ENCODE measurements at regions of chr17 and their contacts with region 1.

Region 1: DNA sequence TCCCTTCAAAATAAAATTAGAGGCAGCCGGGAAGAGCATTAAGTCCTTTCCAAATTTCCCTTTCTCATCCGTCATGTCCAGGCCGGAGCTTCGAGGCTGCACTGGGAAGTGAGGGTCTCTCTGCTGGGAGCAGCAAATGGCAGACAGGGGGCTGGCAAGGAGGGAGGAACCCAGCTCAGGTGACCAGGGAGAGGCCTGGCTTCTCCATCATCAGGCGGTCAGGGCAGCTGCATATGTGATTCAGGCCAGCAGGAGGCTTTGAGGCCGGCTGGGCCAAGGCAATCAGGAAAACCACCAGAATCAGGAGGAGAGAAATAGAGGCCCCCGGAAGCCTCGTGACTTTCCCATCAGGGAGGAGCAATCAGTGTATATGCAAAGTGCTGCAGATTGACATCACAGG is 85.0 kb upstream of the RPL38 start:
- DNase-seq: peak; percentile 79
- ATAC-seq: peak; percentile 87
- H3K4me3 Mint-ChIP-seq: 0 out of 2 replicates have a peak overlapping the region, but pooled peaks have one; percentile 13
- H3K27ac Mint-ChIP-seq: peak overlapping the region; percentile 69
- H3K4me1 Mint-ChIP-seq: peaks cover 51% of the 10 kb centered on the region
- H3K27me3 Mint-ChIP-seq: peaks cover 6% of the 10 kb centered on the region; the same call in 1 of the 2 replicates
- CTCF ChIP-seq: 0 out of 2 replicates have a peak, but pooled peaks have one; percentile 27

Region 2: DNA sequence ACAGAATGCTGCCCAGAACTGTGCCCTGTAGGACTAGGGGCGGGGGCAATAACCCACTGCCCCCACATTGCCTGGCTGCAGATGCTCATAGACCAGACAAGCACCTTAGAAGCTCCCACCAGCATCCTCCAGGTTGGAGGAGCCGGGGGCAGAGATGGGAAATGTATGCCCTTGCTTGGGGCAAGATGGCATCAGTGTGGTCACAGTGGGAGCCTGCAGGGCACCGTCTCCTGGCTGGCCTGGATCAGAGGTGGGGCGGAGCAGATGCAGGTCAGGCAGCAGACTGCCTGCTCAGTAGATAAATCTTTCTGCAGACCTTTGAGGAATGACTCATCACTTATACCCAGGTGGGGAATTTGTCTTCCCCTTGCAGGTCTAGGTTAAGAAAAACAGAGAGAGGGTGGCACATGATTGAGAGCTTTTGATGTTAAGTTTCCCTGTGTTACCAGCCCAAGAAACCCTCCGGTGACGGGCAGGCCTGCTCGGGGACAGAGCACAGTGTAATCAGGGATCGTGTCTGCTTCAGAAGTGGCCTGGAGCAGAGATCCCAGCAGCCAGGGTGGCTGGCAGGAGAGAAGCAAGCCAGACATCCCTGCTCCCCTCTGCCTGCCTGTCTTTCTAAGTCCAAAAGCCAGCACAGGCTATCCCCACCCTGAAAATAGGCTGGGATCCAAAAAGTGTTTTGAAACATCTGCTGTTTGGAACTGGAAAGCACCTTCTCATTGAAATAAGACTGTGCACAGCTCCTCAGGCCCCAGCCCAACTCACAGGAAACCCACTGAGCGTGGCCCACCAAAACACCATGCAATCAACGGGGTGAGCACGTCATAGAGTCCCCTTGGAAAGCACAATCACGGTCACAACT is 34.3 kb after region 1 on chr17:
- CTCF ChIA-PET with region 1: interaction called, 12 read pairs
- POLR2A ChIA-PET with region 1: no interaction called
- DNase-seq: no peak
- ATAC-seq: no peak
- H3K4me3 Mint-ChIP-seq: no peak overlapping the region
- H3K27ac Mint-ChIP-seq: no peak overlapping the region
- H3K4me1 Mint-ChIP-seq: peaks cover 17% of the 10 kb centered on the region
- H3K27me3 Mint-ChIP-seq: no peaks in the 10 kb centered on the region; the same call in 1 of the 2 replicates
- CTCF ChIP-seq: no peak

Region 3: GRCh38 chr17:74176546-74177001 is 58.1 kb after region 1 on chr17:
- CTCF ChIA-PET with region 1: interaction called, 19 read pairs
- POLR2A ChIA-PET with region 1: interaction called, 4 read pairs
- DNase-seq: peak; percentile 81
- ATAC-seq: peak; percentile 89
- H3K4me3 Mint-ChIP-seq: no peak overlapping the region
- H3K27ac Mint-ChIP-seq: no peak overlapping the region
- H3K4me1 Mint-ChIP-seq: peaks cover 9% of the 10 kb centered on the region; the same call in 1 of the 2 replicates
- H3K27me3 Mint-ChIP-seq: peaks cover 4% of the 10 kb centered on the region
- CTCF ChIP-seq: peak; percentile 81

Region 4: DNA sequence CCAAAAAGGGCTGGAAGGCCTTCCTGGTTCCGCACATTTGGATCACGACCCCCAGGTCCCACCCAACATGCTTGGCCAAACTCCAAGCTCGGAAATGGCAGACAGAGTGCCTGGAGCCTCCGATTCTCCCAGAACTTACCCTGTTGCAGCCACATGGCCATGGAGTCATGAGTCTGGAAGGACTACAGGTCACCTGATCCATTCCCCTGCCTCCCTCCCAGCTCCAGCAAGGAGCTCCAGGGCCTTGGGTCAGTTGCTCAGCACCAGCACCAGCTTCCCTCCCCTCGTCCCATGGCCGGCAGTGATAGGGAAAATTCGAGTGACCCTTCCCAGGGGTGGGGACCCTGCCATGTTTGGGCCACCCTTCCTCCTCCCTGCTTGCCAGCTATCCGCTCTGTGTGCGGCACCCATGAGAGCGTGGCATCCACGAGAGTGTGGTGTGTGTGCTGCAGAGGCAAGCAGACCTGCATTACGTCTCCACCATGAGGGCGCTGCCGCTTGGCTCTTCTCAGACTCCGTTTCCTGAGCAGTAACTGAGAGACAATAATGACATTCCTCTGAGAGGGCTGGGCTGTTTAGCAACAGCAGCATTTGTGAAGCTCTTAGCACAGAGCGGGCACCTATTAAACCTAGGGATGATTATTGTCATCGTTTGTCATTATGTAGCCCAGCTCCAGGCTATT is 63.7 kb after region 1 on chr17:
- CTCF ChIA-PET with region 1: interaction called, 19 read pairs
- POLR2A ChIA-PET with region 1: no interaction called
- DNase-seq: no peak
- ATAC-seq: no peak
- H3K4me3 Mint-ChIP-seq: no peak overlapping the region
- H3K27ac Mint-ChIP-seq: no peak overlapping the region
- H3K4me1 Mint-ChIP-seq: peaks cover 12% of the 10 kb centered on the region
- H3K27me3 Mint-ChIP-seq: peaks cover 8% of the 10 kb centered on the region
- CTCF ChIP-seq: no peak